Sigmoid colon (tissue), 7 donors: ENCODE measurements at regions of chr6 and their contacts with region 1.

Region 1: DNA sequence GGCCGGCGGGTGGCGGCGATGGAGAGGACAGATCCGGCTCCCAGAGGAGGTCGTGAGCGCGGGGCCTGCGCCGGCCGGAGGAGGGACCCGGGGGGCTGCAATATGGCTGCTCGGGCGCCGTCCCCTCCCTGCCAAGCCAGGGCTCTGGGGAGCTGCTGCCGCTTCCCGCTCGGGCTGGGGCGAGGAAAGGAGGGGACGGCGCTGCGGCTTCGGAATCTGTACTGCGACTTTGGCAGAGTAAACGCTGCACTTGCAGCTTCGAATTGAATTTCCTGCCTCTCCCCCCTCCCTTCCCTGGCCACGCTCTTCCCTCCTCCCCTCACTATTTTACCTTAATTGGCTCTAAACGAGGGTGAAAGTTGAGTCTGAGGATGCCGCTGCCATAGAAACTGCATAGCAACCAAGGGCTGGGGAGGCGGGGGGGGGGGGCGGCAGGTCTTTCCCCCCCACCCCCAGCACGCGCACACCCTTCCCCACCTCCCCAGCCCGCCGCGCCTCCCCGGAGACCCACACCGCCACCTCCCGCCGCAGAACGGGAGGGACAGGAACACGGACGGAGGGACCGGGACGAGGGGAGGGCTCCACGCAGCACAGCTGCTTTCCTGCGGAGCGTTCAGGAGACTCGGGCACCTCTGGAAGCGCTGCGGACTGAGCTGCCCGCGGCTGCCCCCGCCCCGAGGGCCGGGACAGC is 93.9 kb downstream of the RNASET2 start:
- DNase-seq: no peak
- H3K4me3 ChIP-seq: peak overlapping the region; percentile 53 to 75 (median 66)
- H3K27ac ChIP-seq: peak overlapping the region; percentile 33 to 72 (median 54)
- H3K4me1 ChIP-seq: peaks cover 0 to 29% (median 19%) of the 10 kb centered on the region in 4 donors
- H3K27me3 ChIP-seq: peaks cover 0 to 5% (median 0%) of the 10 kb centered on the region in 3 donors
- CTCF ChIP-seq: no peak
- EP300 ChIP-seq: no peak
- POLR2A ChIP-seq: no peak

Region 2: GRCh38 chr6:166786704-166787293 is 75.6 kb before region 1 on chr6:
- intact Hi-C with region 1: loop called (anchors 2 kb)
- DNase-seq: no peak
- H3K4me3 ChIP-seq: no peak overlapping the region
- H3K27ac ChIP-seq: no peak overlapping the region
- H3K4me1 ChIP-seq: no peaks in the 10 kb centered on the region
- H3K27me3 ChIP-seq: no peaks in the 10 kb centered on the region
- CTCF ChIP-seq: peak; percentile 37 to 75 (median 61)
- EP300 ChIP-seq: no peak
- POLR2A ChIP-seq: no peak

Region 3: DNA sequence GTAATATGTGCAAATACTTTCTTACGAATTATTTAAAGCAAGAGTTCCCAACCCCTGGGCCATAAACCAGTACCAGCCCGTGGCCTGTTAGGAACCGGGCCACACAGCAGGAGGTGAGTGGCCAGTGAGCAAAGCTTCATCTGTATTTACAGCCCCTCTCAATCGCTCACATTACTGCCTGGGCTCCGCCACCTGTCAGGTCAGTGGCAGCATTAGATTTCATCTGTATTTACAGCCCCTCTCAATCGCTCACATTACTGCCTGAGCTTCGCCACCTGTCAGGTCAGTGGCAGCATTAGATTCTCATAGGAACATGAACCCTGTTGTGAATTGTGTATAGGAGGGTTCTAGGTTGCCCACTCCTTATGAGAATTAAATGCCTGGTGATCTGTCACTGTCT is 48.0 kb before region 1 on chr6:
- intact Hi-C with region 1: no loop called
- DNase-seq: no peak
- H3K4me3 ChIP-seq: no peak overlapping the region
- H3K27ac ChIP-seq: no peak overlapping the region
- H3K4me1 ChIP-seq: no peaks in the 10 kb centered on the region
- H3K27me3 ChIP-seq: no peaks in the 10 kb centered on the region
- CTCF ChIP-seq: no peak
- EP300 ChIP-seq: no peak
- POLR2A ChIP-seq: no peak

Region 4: DNA sequence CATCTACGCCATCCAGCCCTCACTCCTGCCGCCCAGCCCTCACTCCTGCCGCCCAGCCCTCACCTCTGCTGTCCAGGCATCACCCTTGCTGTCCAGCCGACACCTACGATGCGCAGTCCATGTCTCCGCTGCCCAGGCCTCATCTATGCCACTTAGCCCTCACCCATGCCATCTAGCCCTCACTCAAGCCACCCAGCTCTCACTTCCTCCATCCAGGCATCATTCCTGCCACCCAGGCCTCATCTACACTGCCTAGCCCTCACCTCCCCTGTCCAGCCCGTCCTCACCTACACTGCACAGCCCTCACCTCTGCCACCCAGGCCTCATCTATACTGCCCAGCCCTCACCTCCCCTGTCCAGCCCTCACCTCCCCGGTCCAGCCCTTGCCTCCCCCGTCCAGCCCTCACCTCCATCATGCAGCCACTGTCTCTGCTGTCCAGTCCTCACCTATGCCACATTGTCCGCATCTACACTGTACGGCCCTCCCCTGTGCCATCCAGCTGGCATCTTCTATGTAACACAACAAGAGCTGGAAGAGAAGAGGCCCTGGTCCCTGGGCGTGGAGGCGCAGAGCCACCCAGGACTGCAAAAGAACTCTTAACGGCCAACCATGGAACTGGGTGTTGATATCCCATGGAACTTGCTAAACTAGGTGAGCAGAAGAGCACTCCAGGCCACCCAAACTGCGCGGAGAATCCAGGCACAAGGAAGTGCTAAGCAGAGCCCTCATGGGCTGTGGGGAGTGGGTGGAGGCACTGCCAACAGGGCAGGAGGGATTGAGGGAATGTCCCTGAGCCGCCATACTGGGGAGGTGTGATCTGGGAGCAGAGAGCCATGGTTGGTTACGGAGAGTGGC is 62.9 kb after region 1 on chr6:
- intact Hi-C with region 1: no loop called
- DNase-seq: no peak
- H3K4me3 ChIP-seq: no peak overlapping the region
- H3K27ac ChIP-seq: no peak overlapping the region
- H3K4me1 ChIP-seq: peaks cover 0 to 14% (median 6%) of the 10 kb centered on the region in 4 donors
- H3K27me3 ChIP-seq: no peaks in the 10 kb centered on the region
- CTCF ChIP-seq: no peak
- EP300 ChIP-seq: no peak
- POLR2A ChIP-seq: no peak

Region 5: DNA sequence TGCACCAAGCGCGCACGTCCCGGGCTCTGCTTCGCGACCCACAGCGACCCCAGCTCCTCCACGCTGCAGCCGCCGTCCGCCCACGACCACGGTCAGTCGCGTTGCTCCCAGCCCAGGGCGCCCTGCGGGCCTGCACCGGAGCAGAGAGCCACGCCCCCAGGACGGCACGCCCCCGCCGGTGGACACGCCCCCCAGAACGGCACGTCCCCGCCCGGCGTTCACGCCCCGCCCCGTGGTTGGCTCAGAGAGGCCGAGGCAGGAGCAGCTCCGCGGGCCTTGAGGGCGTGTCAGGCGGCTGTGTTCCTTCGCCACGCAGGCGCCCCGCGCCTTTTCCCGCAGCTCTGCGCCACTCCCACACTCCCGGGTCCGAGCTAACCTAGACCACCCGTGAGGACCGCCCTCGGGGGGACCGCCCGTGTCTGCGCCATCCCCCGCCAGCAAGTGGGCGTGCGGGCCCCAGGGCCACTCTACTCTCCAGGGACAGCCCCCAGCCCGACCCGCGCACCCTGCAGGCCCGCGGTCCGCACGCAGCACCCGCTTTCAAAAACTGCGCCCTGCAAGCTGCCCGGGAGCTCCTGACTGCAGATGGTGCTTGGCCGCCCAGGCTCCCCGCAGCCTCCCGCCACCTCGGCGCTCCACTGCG is 94.1 kb after region 1 on chr6 and contains the start of gene RNASET2:
- intact Hi-C with region 1: loop called (anchors 10 kb)
- DNase-seq: peak; percentile 98
- H3K4me3 ChIP-seq: peak within 1 kb of the TSS; percentile 63 to 97 (median 78)
- H3K27ac ChIP-seq: peak within 1 kb of the TSS; percentile 82 to 90 (median 88)
- H3K4me1 ChIP-seq: peaks cover 0 to 21% (median 17%) of the 10 kb centered on the region in 4 donors
- H3K27me3 ChIP-seq: no peaks in the 10 kb centered on the region
- CTCF ChIP-seq: no peak
- EP300 ChIP-seq: no peak
- POLR2A ChIP-seq: peak; percentile 56 to 84
- total RNA-seq, gene RNASET2: 41.0 to 53.1 (median 42.5) TPM